AG04450 (cell line): ENCODE measurements at regions of chr2 and their contacts with region 1.

Region 1: DNA sequence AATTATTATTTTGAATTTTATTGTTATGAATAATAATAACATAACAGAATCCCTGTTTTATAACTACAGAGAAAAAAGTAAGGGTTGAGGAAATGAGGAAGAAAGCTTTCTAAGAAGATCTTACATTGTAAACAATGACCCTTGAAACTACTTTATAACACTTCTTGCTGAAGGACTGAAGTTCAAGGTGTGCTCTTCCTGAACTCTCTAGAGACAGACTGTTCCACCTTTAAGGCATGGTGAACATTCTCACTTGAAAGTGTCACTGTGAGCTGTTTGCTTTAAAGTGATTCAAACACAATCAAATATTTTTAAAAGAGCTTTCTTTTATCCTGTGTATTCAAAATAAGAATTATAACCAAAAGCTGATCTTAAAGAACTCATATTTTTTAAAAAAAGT is 131.5 kb downstream of the DNAH7 start:
- DNase-seq: no peak
- H3K4me3 ChIP-seq: no peak overlapping the region
- H3K27ac ChIP-seq: no peak overlapping the region
- H3K27me3 ChIP-seq: no peaks in the 10 kb centered on the region
- CTCF ChIP-seq: no peak

Region 2: DNA sequence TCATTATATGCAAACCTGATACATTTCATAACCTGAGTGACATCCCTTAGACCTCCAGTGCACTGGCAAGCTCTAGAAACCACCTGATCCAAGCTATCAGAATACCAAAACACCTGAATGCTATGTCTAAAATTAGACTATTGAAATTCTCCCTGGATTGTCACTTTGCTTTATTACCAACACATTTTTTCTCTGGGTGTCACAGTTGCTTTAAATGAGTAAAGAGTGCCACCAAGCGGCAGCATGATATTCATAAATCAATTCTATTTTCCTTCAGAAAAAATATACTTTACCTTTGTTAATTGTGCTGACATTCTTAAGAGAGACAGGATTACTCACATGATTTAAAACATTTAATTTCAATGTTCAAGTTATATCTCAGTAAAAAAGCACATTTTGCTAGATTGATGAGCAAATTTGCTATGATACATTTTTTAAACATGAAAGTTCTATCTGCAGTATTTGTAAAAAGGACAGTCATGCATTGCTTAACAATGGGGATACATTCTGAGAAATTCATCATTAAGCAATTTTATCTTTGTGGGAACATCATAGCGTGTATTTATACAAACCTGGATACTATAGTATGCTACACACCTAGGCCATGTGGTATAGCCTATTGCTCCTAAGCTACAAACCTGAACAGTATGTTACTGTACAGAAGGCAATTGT is 618.6 kb before region 1 on chr2:
- CTCF ChIA-PET with region 1: interaction called, 30 read pairs
- POLR2A ChIA-PET with region 1: interaction called, 4 read pairs
- DNase-seq: no peak
- H3K4me3 ChIP-seq: no peak overlapping the region
- H3K27ac ChIP-seq: no peak overlapping the region
- H3K27me3 ChIP-seq: no peaks in the 10 kb centered on the region
- CTCF ChIP-seq: peak; percentile 45; the same call in 1 of the 2 replicates

Region 3: GRCh38 chr2:195664528-195664927 is 272.6 kb before region 1 on chr2:
- CTCF ChIA-PET with region 1: interaction called, 219 read pairs
- POLR2A ChIA-PET with region 1: no interaction called
- DNase-seq: no peak
- H3K4me3 ChIP-seq: no peak overlapping the region
- H3K27ac ChIP-seq: no peak overlapping the region
- H3K27me3 ChIP-seq: no peaks in the 10 kb centered on the region
- CTCF ChIP-seq: peak; percentile 42

Region 4: GRCh38 chr2:195737173-195738043 is 199.8 kb before region 1 on chr2:
- CTCF ChIA-PET with region 1: no interaction called
- POLR2A ChIA-PET with region 1: no interaction called
- DNase-seq: no peak
- H3K4me3 ChIP-seq: no peak overlapping the region
- H3K27ac ChIP-seq: no peak overlapping the region
- H3K27me3 ChIP-seq: no peaks in the 10 kb centered on the region
- CTCF ChIP-seq: no peak

Region 5: DNA sequence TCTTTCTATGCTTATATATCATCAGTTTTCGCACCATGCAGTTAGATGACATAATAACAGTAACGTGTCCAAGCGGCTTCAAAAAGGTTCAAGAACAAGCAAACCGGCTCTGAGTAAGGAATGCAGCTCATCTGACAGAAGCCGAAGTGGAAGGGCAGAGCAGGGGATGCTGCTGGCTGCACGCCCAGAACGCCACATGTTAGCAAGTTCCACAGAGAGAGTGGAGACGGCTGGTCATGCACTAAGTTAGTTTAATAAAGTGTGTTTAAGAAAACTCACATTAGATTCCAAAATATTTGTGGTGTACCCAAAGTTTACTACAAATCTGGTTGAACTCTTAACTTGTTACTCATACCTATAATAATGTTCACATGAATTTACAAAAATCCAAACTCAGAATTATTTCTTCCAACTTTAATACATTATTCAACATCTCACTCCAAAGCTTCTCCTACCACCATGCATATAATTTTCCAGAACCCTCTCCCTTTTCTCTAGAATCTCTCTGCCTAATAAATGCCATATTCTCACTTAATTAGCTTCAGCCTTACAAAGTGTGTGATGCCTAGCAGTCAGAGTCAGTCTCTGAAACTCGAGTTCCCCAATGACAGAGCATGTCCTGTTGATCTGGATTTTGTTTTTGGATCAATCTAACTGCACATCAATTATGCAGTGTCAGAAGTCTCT is 38.5 kb before region 1 on chr2:
- CTCF ChIA-PET with region 1: interaction called, 14 read pairs
- POLR2A ChIA-PET with region 1: no interaction called
- DNase-seq: peak; percentile 99
- H3K4me3 ChIP-seq: no peak overlapping the region
- H3K27ac ChIP-seq: peak overlapping the region; percentile 40
- H3K27me3 ChIP-seq: no peaks in the 10 kb centered on the region
- CTCF ChIP-seq: no peak